Dendritic cell treated with granulocyte-macrophage colony-stimulating factor and Interleukin-4, amounts not matched to agents 40 ng/mL and 50 ng/mL, for 4 days (primary cell): ENCODE measurements at regions of chr5 and their contacts with region 1.

Region 1: GRCh38 chr5:159106569-159107282 is 7.0 kb upstream of the EBF1 start:
- H3K4me3 Mint-ChIP-seq: peak overlapping the region; percentile 71
- H3K27ac Mint-ChIP-seq: no peak overlapping the region
- H3K4me1 Mint-ChIP-seq: peaks cover 26% of the 10 kb centered on the region
- H3K27me3 Mint-ChIP-seq: peaks cover 76% of the 10 kb centered on the region

Region 2: DNA sequence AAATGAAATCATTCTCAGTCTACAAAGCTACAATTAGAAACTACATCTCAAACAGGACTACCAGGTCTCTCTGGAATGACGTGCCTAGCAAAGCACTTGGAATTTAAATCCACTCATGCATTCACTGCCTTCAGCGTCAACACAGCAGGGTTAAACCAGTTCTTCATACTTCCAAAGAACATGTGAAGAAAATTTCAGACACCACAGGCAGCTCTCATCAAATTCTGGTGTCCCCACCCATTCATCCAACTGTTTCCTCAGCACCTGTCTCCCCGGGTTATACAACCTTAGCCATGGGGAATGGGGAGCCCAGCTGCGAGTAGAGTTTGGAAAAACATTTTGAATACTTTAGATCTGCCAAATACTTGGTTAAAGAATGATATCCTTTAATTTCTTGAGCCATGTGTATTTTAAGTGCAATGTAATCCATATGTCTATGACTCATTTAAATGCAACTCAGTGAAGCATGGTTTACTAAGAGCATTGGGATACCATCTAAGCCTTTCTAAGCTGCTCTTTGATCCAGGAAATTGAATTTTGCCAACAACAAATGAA is 1548.6 kb before region 1 on chr5:
- intact Hi-C with region 1: no loop called
- H3K4me3 Mint-ChIP-seq: no peak overlapping the region
- H3K27ac Mint-ChIP-seq: no peak overlapping the region
- H3K4me1 Mint-ChIP-seq: peaks cover 77% of the 10 kb centered on the region
- H3K27me3 Mint-ChIP-seq: peaks cover 16% of the 10 kb centered on the region

Region 3: GRCh38 chr5:158695595-158696330 is 411.0 kb before region 1 on chr5:
- intact Hi-C with region 1: loop called (anchors 1 kb)
- H3K4me3 Mint-ChIP-seq: no peak overlapping the region
- H3K27ac Mint-ChIP-seq: no peak overlapping the region
- H3K4me1 Mint-ChIP-seq: no peaks in the 10 kb centered on the region
- H3K27me3 Mint-ChIP-seq: peaks cover 13% of the 10 kb centered on the region